ENCODE measurements at regions of chr20 and their contacts with region 1.

Region 1: DNA sequence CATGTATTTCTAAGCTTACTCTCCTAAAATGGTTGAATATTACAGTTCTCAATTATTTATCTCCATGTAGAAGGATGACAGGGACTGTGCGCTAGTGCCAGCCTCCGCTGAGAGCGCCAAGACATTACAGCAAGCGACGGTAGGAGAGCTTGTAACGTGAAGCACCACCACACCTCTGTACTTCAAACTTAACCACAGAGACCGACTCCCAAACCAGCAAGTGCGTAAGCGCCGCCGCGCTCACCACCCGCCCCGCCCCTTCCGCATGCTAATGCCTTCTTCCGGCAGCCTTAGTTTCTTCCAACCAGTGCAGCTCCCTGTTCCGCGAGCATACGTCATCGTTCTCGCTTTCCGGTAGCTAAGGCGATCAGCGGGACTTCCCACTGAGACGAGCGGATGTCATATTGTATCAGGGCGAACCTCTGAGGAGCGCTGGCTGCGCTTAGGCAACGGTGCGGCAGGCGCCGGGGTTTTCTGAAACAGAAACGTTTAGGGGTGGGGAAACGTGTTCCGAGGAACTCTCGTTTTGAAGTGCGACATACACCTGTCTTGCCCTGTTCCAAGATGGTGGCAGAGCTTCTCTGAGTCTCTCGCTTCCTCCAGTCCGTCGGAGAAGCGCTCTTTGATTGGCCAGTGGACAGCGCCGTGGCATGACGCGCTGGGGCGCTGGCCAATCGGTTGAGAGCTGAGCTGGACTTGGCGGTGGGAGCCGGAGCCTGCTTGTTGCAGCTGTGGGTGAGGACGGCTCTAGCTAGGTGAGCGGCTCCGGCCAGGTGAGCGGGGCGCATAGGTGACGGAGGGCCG is at the start of gene SEC23B:
- DNase-seq: peak; percentile 97
- ATAC-seq: peak; percentile 97
- H3K4me3 ChIP-seq: peak within 1 kb of the TSS; percentile 71 to 90
- H3K27ac ChIP-seq: peak within 1 kb of the TSS; percentile 75
- H3K4me1 ChIP-seq: peaks cover 5 to 17% of the 10 kb centered on the region in 2 experiments; a peak in 3 of 4 replicates
- H3K27me3 ChIP-seq: no peaks in the 10 kb centered on the region
- CTCF ChIP-seq: no peak
- POLR2A ChIP-seq: peak; percentile 93
- RAD21 ChIP-seq: no peak
- total RNA-seq, gene SEC23B: 85.8 TPM

Region 2: GRCh38 chr20:18466894-18467730 is 40.3 kb before region 1 on chr20 and contains the starts of genes DZANK1 and POLR3F:
- CTCF ChIA-PET with region 1: interaction called, 3 read pairs
- POLR2A ChIA-PET with region 1: interaction called, 12 read pairs
- RAD21 ChIA-PET with region 1: no interaction called
- intact Hi-C with region 1: loop called (anchors 1 kb)
- DNase-seq: peak; percentile 91
- ATAC-seq: peak; percentile 98
- H3K4me3 ChIP-seq: peak within 1 kb of the TSS; percentile 82 to 99
- H3K27ac ChIP-seq: peak within 1 kb of the TSS; percentile 91
- H3K4me1 ChIP-seq: peaks cover 13% of the 10 kb centered on the region in 2 experiments
- H3K27me3 ChIP-seq: no peaks in the 10 kb centered on the region
- CTCF ChIP-seq: no peak
- POLR2A ChIP-seq: peak; percentile 42
- RAD21 ChIP-seq: no peak
- total RNA-seq, gene DZANK1: 1.7 TPM
- total RNA-seq, gene POLR3F: 11.4 TPM

Region 3: DNA sequence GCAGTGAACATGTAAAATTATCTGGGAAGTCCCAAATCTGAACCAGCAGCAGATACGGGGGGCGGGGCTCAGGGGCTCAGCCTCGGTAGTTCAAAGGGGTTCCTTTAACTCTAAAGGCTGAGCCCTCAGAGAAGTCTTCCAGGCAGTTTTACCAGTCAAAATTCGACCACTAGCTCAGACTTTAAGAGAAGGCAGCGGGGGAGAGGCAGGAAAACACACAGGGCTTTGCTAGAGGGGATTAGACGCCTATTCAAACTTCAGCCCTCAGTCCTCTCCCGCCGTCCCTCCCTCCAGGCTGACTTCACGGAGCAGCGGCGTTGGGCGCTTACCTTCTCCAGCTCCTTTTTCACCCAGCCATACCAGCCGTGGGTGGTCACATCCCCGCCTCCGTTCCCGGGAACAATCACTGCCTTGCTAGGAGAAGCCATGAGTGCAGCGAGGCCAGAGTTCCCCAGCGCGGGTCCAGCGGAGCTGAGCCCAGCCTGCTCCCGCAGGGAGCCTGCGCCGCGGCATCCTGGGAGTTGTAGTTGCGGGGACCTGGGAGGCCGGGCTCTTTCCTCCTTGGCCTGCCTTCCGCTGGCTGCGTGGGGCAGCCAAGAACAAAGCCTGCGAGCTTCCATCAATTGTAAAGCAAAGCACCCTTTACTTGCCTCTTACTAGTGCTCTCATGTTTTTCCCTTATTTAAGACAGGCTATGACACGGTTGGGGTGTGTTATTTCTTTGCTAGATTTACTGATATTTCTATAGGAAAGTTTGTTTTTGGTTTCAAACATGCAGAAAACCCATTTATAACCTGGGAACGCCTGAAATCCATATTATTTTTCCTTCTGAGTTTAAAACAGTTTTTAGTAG is 10.5 kb before region 1 on chr20 and contains the start of gene RBBP9:
- CTCF ChIA-PET with region 1: interaction called, 6 read pairs
- POLR2A ChIA-PET with region 1: interaction called, 43 read pairs
- RAD21 ChIA-PET with region 1: interaction called in 1 of 2 experiments, 3 read pairs
- intact Hi-C with region 1: no loop called
- DNase-seq: peak; percentile 56
- ATAC-seq: peak; percentile 100
- H3K4me3 ChIP-seq: peak within 1 kb of the TSS; percentile 74 to 76
- H3K27ac ChIP-seq: peak within 1 kb of the TSS; percentile 52
- H3K4me1 ChIP-seq: peaks cover 3 to 10% of the 10 kb centered on the region in 2 experiments; a peak in 3 of 4 replicates
- H3K27me3 ChIP-seq: no peaks in the 10 kb centered on the region
- CTCF ChIP-seq: no peak
- POLR2A ChIP-seq: peak; percentile 49
- RAD21 ChIP-seq: no peak
- total RNA-seq, gene RBBP9: 10.3 TPM

Region 4: DNA sequence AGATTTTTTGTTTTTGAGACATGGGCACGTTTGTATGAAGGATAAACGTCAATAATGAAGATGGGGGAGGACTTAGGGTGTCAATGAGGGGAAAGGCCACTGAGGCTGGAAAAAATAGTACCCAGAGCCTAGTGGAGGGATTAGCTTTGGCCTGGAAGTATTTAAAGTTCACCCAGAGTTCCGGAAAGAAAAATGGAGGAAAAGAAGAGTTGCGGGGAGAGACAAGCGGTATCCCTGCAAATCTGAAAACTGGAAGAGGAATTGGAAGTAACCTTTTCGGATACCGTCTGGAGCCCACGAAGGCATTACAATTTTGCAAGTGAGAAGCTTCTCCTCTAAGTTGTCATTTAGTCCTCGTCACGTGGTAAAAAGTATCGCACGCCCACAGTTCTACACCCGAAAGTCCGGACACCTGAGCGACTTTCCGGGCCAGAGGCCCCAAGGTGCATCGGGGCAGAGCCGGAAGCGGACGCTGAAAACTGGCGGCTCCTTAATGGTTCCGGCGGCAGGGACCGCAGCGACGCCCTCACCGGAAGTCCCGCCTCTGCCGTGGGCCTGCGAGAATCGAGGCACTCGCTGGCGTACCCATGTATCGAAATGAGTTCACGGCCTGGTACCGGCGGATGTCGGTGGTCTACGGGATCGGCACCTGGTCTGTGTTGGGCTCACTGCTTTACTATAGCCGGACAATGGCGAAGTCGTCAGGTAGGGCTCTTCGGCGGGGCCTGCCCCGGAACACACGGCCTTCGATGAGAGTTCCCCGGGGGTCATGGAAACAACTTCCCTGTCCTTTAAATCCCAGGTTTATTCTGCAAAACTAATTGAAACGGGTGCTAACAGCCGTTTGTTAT is 59.7 kb after region 1 on chr20 and contains the start of gene SMIM26:
- CTCF ChIA-PET with region 1: interaction called, 3 read pairs
- POLR2A ChIA-PET with region 1: interaction called, 9 read pairs
- RAD21 ChIA-PET with region 1: no interaction called
- intact Hi-C with region 1: loop called (anchors 5 kb)
- DNase-seq: peak; percentile 85
- ATAC-seq: peak; percentile 99
- H3K4me3 ChIP-seq: peak within 1 kb of the TSS; percentile 71 to 97
- H3K27ac ChIP-seq: peak within 1 kb of the TSS; percentile 73
- H3K4me1 ChIP-seq: peaks cover 0 to 4% of the 10 kb centered on the region in 2 experiments; a peak in 2 of 4 replicates
- H3K27me3 ChIP-seq: no peaks in the 10 kb centered on the region
- CTCF ChIP-seq: no peak
- POLR2A ChIP-seq: peak; percentile 58
- RAD21 ChIP-seq: no peak
- total RNA-seq, gene SMIM26: 80.1 TPM

Region 5: GRCh38 chr20:18587665-18588573 is 80.5 kb after region 1 on chr20 and contains the start of gene DTD1:
- CTCF ChIA-PET with region 1: no interaction called
- POLR2A ChIA-PET with region 1: interaction called, 5 read pairs
- RAD21 ChIA-PET with region 1: no interaction called
- intact Hi-C with region 1: loop called (anchors 5 kb)
- DNase-seq: peak; percentile 83
- ATAC-seq: peak; percentile 93
- H3K4me3 ChIP-seq: peak within 1 kb of the TSS; percentile 71 to 82
- H3K27ac ChIP-seq: peak within 1 kb of the TSS; percentile 67
- H3K4me1 ChIP-seq: peaks cover 8 to 17% of the 10 kb centered on the region in 2 experiments; a peak in 3 of 4 replicates
- H3K27me3 ChIP-seq: no peaks in the 10 kb centered on the region
- CTCF ChIP-seq: peak in 2 of 3 experiments; percentile 51 to 77; a peak in 4 of 6 replicates
- POLR2A ChIP-seq: peak; percentile 27
- RAD21 ChIP-seq: no peak
- total RNA-seq, gene DTD1: 54.5 TPM